ENCODE measurements at regions of chr1 and their contacts with region 1.

Region 1: DNA sequence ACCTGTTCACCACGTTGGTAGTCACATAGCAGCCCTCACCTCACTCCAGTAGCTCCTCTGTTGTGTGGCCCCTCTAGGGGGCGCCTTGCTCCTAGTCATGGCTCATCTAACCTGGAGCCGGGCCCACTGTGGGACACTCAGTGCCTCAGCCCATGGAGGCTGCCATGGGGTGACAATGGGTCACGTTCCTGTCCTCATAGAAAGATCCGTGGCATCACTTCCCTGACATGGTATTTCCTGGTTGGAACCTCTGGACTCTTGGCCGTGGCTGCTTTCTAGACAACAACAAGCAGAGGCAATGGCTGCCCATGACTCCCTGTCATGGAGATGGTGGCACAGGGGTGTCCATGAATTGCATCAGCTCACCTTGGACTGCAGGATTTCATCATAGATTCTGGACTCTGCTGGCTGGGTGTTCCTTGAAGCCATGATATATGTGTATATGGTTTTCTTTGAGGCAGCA is 27.5 kb upstream of the SLAMF6 start:
- DNase-seq: no peak
- ATAC-seq: peak; percentile 14; the same call in 1 of the 3 replicates
- H3K4me3 ChIP-seq: no peak overlapping the region
- H3K27ac ChIP-seq: peak overlapping the region; percentile 98
- H3K4me1 ChIP-seq: peaks cover 58% of the 10 kb centered on the region
- H3K27me3 ChIP-seq: no peaks in the 10 kb centered on the region
- CTCF ChIP-seq: peak; percentile 32 to 58 (median 46); a peak in 5 of 6 replicates
- EP300 ChIP-seq: no peak
- POLR2A ChIP-seq: no peak
- RAD21 ChIP-seq: peak; percentile 79

Region 2: GRCh38 chr1:160428655-160429054 is 121.9 kb before region 1 on chr1:
- CTCF ChIA-PET with region 1: interaction called, 153 read pairs
- POLR2A ChIA-PET with region 1: interaction called, 61 read pairs
- RAD21 ChIA-PET with region 1: interaction called, 156 read pairs
- SMC1A ChIA-PET with region 1: interaction called, 107 read pairs
- in situ Hi-C with region 1: loop called (anchors 5 kb)
- intact Hi-C with region 1: loop called (anchors 1 kb)
- DNase-seq: peak; percentile 81
- ATAC-seq: peak; percentile 54
- H3K4me3 ChIP-seq: no peak overlapping the region
- H3K27ac ChIP-seq: peak overlapping the region; percentile 100
- H3K4me1 ChIP-seq: peaks cover 52% of the 10 kb centered on the region
- H3K27me3 ChIP-seq: no peaks in the 10 kb centered on the region
- CTCF ChIP-seq: peak; percentile 58 to 90 (median 58); a peak in 5 of 6 replicates
- EP300 ChIP-seq: no peak
- POLR2A ChIP-seq: no peak
- RAD21 ChIP-seq: peak; percentile 98

Region 3: GRCh38 chr1:160519642-160520435 is 30.8 kb before region 1 on chr1:
- CTCF ChIA-PET with region 1: interaction called, 4 read pairs
- POLR2A ChIA-PET with region 1: interaction called, 17 read pairs
- RAD21 ChIA-PET with region 1: interaction called, 36 read pairs
- SMC1A ChIA-PET with region 1: interaction called, 39 read pairs
- in situ Hi-C with region 1: no loop called
- intact Hi-C with region 1: loop called (anchors 2 kb)
- DNase-seq: peak; percentile 64
- ATAC-seq: peak; percentile 70
- H3K4me3 ChIP-seq: peak overlapping the region; percentile 77
- H3K27ac ChIP-seq: peak overlapping the region; percentile 85
- H3K4me1 ChIP-seq: no peaks in the 10 kb centered on the region
- H3K27me3 ChIP-seq: no peaks in the 10 kb centered on the region
- CTCF ChIP-seq: peak in 2 of 3 experiments; percentile 25 to 27; a peak in 2 of 6 replicates
- EP300 ChIP-seq: no peak
- POLR2A ChIP-seq: no peak
- RAD21 ChIP-seq: peak; percentile 16; the same call in 1 of the 2 replicates

Region 4: GRCh38 chr1:160567858-160568682 is 17.5 kb after region 1 on chr1:
- CTCF ChIA-PET with region 1: interaction called, 121 read pairs
- POLR2A ChIA-PET with region 1: interaction called, 76 read pairs
- RAD21 ChIA-PET with region 1: interaction called, 292 read pairs
- SMC1A ChIA-PET with region 1: interaction called, 735 read pairs
- in situ Hi-C with region 1: no loop called
- intact Hi-C with region 1: no loop called
- DNase-seq: no peak
- ATAC-seq: peak; percentile 86
- H3K4me3 ChIP-seq: peak overlapping the region; percentile 28; the same call in 1 of the 2 replicates
- H3K27ac ChIP-seq: peak overlapping the region; percentile 68
- H3K4me1 ChIP-seq: peaks cover 22% of the 10 kb centered on the region
- H3K27me3 ChIP-seq: no peaks in the 10 kb centered on the region
- CTCF ChIP-seq: no peak
- EP300 ChIP-seq: no peak
- POLR2A ChIP-seq: peak; percentile 38; the same call in 1 of the 2 replicates
- RAD21 ChIP-seq: no peak

Region 5: DNA sequence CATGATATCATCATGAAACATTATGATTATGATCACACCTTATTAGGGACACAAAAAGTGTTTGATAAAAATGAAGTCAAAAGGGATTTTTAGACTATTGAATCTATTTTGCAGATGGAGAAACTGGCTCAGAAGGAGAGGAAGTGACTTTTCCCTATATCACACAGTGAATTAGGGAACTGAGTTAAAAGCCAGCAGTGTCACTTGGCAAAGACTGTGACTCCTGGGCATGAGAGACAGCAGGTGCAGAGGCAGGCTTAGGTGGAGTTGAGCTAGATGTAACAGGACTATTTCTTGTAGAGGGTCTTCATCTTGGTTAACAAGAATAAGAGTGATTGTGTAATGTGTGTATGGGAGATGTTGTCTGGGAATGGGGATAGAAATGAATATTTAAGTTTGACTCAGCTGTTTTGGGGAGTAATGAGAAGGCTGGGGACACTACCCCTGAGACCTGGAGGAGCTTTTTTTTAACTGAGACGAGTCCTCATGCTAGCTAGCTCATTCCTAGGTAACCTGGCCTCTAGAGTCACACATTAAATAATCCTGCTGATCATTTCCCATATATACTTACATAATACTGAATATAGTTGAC is 29.7 kb after region 1 on chr1:
- CTCF ChIA-PET with region 1: interaction called, 121 read pairs
- POLR2A ChIA-PET with region 1: interaction called, 76 read pairs
- RAD21 ChIA-PET with region 1: interaction called, 292 read pairs
- SMC1A ChIA-PET with region 1: interaction called, 735 read pairs
- in situ Hi-C with region 1: no loop called
- intact Hi-C with region 1: loop called (anchors 2 kb)
- DNase-seq: no peak
- ATAC-seq: no peak
- H3K4me3 ChIP-seq: no peak overlapping the region
- H3K27ac ChIP-seq: no peak overlapping the region
- H3K4me1 ChIP-seq: peaks cover 25% of the 10 kb centered on the region
- H3K27me3 ChIP-seq: no peaks in the 10 kb centered on the region
- CTCF ChIP-seq: no peak
- EP300 ChIP-seq: no peak
- POLR2A ChIP-seq: no peak
- RAD21 ChIP-seq: no peak

Region 6: DNA sequence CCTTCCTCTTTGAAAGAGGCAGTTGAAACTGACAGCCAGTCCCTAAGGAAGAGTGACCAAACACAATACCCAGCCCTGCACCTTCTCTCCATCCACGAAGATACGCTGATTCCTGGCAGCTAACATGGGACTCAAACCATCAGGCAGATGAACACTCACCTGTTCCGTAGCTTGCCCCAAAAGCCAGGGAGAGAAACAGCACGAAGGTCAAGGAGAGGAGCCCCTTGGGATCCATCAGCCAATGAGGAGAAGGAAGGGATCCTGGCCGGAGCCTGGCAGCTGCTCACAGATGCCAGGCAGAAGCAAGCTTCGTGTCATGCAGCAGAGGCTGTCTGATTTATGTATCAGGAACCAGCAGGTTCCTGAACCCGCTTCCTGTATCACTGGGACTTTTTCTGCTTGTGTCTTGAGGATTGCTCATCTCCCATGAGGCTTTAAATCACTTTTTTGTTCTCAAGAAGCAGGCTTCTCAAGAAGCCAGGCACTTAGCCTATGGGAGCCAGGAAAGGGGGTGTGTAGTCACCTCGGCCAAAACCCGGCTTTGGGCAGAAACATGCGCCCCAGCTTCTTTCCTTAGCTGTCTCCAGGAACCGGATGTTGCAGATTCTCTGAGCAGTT is 96.2 kb after region 1 on chr1 and contains the start of gene SLAMF1:
- CTCF ChIA-PET with region 1: interaction called, 4 read pairs
- POLR2A ChIA-PET with region 1: interaction called, 8 read pairs
- RAD21 ChIA-PET with region 1: interaction called, 24 read pairs
- SMC1A ChIA-PET with region 1: interaction called, 9 read pairs
- in situ Hi-C with region 1: no loop called
- intact Hi-C with region 1: no loop called
- DNase-seq: peak; percentile 95
- ATAC-seq: peak; percentile 63
- H3K4me3 ChIP-seq: peak within 1 kb of the TSS; percentile 95
- H3K27ac ChIP-seq: peak within 1 kb of the TSS; percentile 95
- H3K4me1 ChIP-seq: peaks cover 19% of the 10 kb centered on the region
- H3K27me3 ChIP-seq: no peaks in the 10 kb centered on the region
- CTCF ChIP-seq: no peak
- EP300 ChIP-seq: peak; percentile 5 to 19; a peak in 1 of 4 replicates
- POLR2A ChIP-seq: peak; percentile 82
- RAD21 ChIP-seq: no peak
- polyA plus RNA-seq, gene SLAMF1: 128 to 145 TPM

Region 7: DNA sequence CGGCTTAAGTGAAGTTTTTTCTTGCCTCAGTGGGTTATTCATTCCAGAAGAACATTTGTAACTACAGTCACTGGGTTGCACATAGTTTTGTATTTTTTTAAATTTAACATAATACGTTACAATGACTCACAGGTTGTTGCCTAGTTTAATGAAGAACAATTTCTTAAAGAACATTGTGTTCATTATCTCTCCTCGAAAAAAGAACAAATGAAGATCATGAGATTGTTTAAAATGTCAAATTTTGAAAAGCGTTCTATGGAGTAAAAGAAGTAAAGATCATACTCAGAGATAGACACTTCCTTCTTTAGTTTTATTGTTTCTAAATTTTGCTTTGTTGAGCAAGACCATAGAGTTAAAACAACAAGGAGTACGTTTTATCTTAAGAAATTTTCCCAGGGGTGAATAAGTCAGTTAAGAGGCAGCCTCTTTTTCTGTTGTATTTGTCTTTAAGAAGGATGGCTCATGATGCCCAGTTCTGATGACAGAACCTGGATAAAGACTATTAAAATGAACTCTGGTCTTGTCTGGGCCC is 106.7 kb after region 1 on chr1:
- CTCF ChIA-PET with region 1: no interaction called
- POLR2A ChIA-PET with region 1: no interaction called
- RAD21 ChIA-PET with region 1: no interaction called
- SMC1A ChIA-PET with region 1: no interaction called
- in situ Hi-C with region 1: no loop called
- intact Hi-C with region 1: no loop called
- DNase-seq: no peak
- ATAC-seq: no peak
- H3K4me3 ChIP-seq: no peak overlapping the region
- H3K27ac ChIP-seq: peak overlapping the region; percentile 76
- H3K4me1 ChIP-seq: peaks cover 59% of the 10 kb centered on the region
- H3K27me3 ChIP-seq: no peaks in the 10 kb centered on the region
- CTCF ChIP-seq: no peak
- EP300 ChIP-seq: no peak
- POLR2A ChIP-seq: no peak
- RAD21 ChIP-seq: no peak